Transverse colon (tissue), 4 donors: ENCODE measurements at regions of chr17 and their contacts with region 1.

Region 1: DNA sequence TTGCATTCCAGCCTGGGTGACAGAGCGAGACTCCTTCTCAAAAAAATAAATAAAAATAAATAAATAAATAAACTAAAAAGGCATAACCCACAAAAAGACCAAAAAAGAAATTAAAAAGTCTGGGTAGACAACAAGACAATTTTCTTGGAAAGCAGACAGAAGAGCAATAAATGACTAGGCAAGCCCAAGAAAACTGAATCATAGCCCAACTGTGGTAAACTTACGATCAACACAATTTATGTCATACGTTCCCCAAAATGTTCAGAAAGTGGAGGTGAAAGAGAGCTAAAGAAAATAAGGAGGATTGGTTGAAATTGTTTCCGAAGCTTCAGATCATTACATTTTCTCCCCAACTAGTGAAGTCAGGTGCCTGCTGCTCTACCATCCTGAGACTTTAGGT is 31.3 kb upstream of the C17orf78 start:
- DNase-seq: no peak
- H3K4me3 ChIP-seq: no peak overlapping the region
- H3K27ac ChIP-seq: no peak overlapping the region
- H3K4me1 ChIP-seq: no peaks in the 10 kb centered on the region
- H3K27me3 ChIP-seq: no peaks in the 10 kb centered on the region
- CTCF ChIP-seq: no peak
- EP300 ChIP-seq: no peak
- POLR2A ChIP-seq: no peak

Region 2: DNA sequence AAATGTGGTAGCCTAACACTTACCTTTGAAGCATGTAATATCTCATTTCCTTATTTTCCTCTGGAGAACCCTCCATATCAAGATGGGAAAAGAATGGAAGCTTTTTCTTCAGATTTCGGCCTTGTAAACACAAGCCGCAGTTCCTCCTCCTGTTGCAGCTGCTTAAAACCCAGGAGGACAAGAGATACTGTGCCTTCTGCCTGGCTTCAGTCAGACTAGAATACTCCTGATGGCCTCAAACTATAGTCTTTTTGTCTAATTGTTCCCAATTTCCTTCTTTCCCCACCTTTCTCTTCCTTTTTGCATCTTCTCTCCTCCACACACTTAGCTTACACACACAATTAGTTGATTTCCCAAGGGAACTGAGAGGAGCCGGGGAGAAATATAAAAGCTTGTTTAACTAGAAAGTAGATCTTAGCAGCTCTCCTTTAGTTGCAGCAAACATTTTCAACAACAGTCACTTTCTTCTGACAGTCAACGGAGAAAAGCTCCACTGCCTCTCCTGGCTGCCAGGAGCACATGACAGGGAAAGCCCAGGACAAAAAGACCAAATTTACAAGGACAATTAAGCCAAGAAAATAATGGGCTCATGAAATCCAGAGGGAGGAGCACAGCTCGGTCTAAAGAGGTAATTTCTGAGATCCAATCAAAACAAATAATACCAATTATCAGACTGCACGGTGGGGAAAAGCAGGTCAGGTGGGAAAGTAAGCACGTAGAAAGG is 45.1 kb before region 1 on chr17:
- in situ Hi-C with region 1: no loop called
- intact Hi-C with region 1: loop called (anchors 2 kb)
- DNase-seq: no peak
- H3K4me3 ChIP-seq: no peak overlapping the region
- H3K27ac ChIP-seq: no peak overlapping the region
- H3K4me1 ChIP-seq: peaks cover 0 to 8% (median 2%) of the 10 kb centered on the region in 4 donors
- H3K27me3 ChIP-seq: no peaks in the 10 kb centered on the region
- CTCF ChIP-seq: no peak
- EP300 ChIP-seq: no peak
- POLR2A ChIP-seq: no peak